B cell (primary cell): ENCODE measurements at regions of chr4 and their contacts with region 1.

Region 1: DNA sequence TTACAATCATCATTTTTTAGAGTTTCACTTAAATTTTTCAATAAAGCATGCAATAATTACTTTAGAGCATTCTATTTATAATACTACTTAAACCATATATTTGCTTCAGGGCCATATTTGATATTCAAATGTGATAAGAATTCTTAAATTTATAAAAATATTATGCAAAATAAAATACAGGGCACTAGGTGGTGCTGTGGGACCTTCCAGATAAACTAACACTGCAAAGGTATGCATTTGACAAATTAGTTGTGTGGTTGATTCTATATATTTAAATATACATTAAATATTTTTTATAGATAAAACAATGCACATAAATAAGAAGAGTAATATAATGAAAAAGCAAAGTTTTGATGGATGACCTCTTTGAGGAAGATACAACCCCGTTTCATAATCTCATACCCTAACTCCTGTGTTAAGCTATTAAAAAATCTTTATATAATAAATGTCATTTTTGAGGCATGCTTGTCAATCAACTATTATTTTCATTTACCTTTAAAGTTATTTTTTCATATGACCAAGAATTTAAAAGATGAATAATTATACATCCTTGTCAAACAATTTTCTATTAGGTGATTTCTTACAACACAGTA is 128.4 kb downstream of the REELD1 start:
- DNase-seq: peak; percentile 33
- ATAC-seq: no peak
- H3K4me3 ChIP-seq: no peak overlapping the region
- H3K4me3 Mint-ChIP-seq: no peak overlapping the region
- H3K27ac ChIP-seq: no peak overlapping the region
- H3K27ac Mint-ChIP-seq: no peak overlapping the region
- H3K4me1 ChIP-seq: peaks cover 3 to 5% of the 10 kb centered on the region in 2 donors
- H3K4me1 Mint-ChIP-seq: peaks cover 9% of the 10 kb centered on the region
- H3K27me3 ChIP-seq: no peaks in the 10 kb centered on the region
- H3K27me3 Mint-ChIP-seq: no peaks in the 10 kb centered on the region
- CTCF ChIP-seq: peak; percentile 88

Region 2: DNA sequence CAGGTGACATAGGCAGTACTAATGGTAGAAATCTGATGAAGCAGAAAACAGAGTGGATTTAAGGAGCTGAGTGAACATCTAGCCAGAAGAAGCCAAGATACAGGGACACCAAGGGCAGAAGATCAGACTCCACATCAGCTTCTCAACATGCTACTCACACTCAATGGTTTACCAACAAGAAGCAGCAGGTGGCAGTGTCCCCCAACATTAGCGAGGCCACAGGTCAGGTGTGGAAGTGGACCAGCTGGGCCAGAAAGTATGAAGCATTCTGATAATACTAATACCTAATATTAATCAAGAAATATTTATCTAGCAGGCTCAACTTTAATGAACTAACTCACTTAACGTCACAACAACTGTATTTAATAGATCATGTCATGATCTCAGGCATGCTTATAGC is 676.4 kb after region 1 on chr4:
- CTCF ChIA-PET with region 1: no interaction called
- POLR2A ChIA-PET with region 1: no interaction called
- intact Hi-C with region 1: loop called (anchors 5 kb)
- DNase-seq: peak; percentile 65
- ATAC-seq: peak; percentile 31
- H3K4me3 ChIP-seq: no peak overlapping the region
- H3K4me3 Mint-ChIP-seq: no peak overlapping the region
- H3K27ac ChIP-seq: no peak overlapping the region
- H3K27ac Mint-ChIP-seq: no peak overlapping the region
- H3K4me1 ChIP-seq: no peaks in the 10 kb centered on the region
- H3K4me1 Mint-ChIP-seq: no peaks in the 10 kb centered on the region
- H3K27me3 ChIP-seq: no peaks in the 10 kb centered on the region
- H3K27me3 Mint-ChIP-seq: peaks cover 5% of the 10 kb centered on the region
- CTCF ChIP-seq: peak; percentile 75

Region 3: DNA sequence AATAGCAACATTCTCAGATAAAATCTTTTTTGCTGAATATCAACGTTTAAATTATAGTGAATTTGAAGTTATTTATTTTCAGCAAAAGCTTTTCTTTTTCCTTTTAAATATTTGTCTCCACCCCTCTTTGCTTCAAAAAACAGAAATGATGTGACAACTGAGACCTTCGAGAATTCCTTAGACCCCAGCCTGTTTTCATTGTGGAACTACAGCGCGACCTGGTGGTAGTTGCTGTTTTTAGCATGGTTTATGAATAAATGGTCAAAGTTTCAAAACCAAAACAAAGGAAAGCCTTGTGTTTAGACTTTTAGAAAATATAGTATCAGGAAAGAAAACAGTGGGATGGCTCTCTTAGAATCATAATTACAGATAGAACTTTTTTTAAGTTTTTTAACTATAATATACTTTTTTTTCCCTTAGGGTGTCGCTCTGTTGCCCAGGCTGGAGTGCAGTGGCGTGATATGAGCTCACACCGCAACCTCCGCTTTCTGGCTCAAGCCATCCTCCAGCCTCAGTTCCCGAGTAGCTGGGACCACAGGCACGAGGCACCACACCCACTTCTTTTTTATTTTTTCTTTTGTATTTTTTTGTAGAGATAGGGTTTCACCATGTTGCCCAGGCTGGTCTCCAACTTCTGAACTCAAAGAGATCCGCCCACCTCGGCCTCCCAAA is 1247.7 kb after region 1 on chr4:
- CTCF ChIA-PET with region 1: no interaction called
- POLR2A ChIA-PET with region 1: no interaction called
- intact Hi-C with region 1: loop called (anchors 5 kb)
- DNase-seq: peak; percentile 15
- ATAC-seq: no peak
- H3K4me3 ChIP-seq: no peak overlapping the region
- H3K4me3 Mint-ChIP-seq: no peak overlapping the region
- H3K27ac ChIP-seq: no peak overlapping the region
- H3K27ac Mint-ChIP-seq: no peak overlapping the region
- H3K4me1 ChIP-seq: no peaks in the 10 kb centered on the region
- H3K4me1 Mint-ChIP-seq: peaks cover 1% of the 10 kb centered on the region
- H3K27me3 ChIP-seq: peaks cover 0 to 3% (median 0%) of the 10 kb centered on the region in 4 experiments
- H3K27me3 Mint-ChIP-seq: peaks cover 18% of the 10 kb centered on the region
- CTCF ChIP-seq: peak; percentile 71